Sigmoid colon (tissue), 7 donors: ENCODE measurements at regions of chr7 and their contacts with region 1.

Region 1: DNA sequence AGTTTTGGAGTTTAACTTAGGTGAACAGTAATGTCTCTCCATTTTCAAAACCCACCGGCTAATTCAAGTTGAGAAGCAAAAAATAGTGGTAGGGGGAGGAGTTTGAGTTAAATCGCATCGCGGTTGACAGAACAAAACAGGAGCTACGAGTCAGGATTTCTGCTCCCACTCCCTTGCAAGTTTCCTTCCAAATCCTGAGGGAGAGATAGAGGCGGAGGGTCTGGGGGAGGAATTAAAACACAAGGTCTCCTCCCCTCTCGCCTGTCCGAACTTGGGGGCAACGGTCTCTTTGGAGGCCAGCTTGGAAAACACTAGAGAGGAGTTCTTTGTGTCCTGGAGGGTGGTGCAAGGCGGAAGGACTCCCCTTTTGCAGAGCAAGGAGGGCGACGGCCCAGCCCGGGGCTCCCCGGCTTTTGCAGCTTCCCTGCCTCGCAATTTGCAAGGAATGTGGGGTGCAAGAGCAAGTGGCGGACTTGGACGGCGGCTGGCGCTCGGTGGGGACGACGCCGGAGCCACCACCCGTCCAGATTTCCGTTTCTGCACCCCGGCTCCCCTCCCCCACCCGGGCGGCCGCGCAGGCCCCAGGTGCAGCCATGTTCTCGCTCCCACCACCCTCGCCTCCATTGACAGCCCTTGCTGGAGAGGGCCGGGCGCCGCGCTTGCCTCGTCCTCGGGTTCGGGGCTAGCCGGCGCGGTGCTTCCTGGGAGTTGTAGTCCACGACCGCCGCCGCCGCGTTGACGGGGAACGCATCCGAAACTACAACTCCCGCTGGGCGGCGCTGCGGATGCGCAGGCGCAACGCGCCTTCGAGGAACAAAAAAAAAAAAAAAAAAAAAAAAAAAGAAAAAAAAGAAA is 454 bp upstream of the GTF2I start:
- DNase-seq: peak; percentile 99
- H3K4me3 ChIP-seq: peak overlapping the region; percentile 81 to 100 (median 100)
- H3K27ac ChIP-seq: peak overlapping the region; percentile 99 to 100 (median 99)
- H3K4me1 ChIP-seq: peaks cover 0 to 49% (median 42%) of the 10 kb centered on the region in 4 donors
- H3K27me3 ChIP-seq: no peaks in the 10 kb centered on the region
- CTCF ChIP-seq: no peak
- EP300 ChIP-seq: peak in 1 of 4 donors; percentile 34
- POLR2A ChIP-seq: peak; percentile 52 to 53

Region 2: GRCh38 chr7:74289659-74290514 is 367.2 kb before region 1 on chr7:
- intact Hi-C with region 1: no loop called
- DNase-seq: peak; percentile 82
- H3K4me3 ChIP-seq: peak overlapping the region; percentile 82 to 96 (median 94)
- H3K27ac ChIP-seq: peak overlapping the region; percentile 75 to 86 (median 82)
- H3K4me1 ChIP-seq: peaks cover 0 to 43% (median 32%) of the 10 kb centered on the region in 4 donors
- H3K27me3 ChIP-seq: no peaks in the 10 kb centered on the region
- CTCF ChIP-seq: no peak
- EP300 ChIP-seq: no peak
- POLR2A ChIP-seq: no peak

Region 3: DNA sequence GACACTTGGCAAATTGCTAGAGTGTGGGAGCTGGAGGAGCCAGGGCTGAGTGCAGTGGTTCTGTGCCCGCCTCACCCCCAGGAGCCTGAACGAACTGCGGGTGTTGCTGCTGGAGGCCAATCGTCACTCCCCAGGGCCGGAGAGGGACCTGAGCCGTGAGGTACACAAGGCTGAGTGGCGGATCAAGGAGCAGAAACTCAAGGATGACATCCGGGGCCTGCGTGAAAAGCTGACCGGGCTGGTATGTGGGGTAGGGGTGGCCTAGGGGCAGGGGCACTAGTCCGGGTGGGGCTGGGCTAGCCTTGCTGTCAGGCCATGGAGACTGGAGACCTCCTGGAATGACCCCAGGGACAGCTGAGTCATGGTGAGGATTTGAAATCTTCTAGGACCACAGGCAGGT is 260.1 kb before region 1 on chr7:
- intact Hi-C with region 1: no loop called
- DNase-seq: peak; percentile 56
- H3K4me3 ChIP-seq: no peak overlapping the region
- H3K27ac ChIP-seq: no peak overlapping the region
- H3K4me1 ChIP-seq: peaks cover 0 to 15% (median 10%) of the 10 kb centered on the region in 4 donors
- H3K27me3 ChIP-seq: no peaks in the 10 kb centered on the region
- CTCF ChIP-seq: no peak
- EP300 ChIP-seq: no peak
- POLR2A ChIP-seq: no peak

Region 4: DNA sequence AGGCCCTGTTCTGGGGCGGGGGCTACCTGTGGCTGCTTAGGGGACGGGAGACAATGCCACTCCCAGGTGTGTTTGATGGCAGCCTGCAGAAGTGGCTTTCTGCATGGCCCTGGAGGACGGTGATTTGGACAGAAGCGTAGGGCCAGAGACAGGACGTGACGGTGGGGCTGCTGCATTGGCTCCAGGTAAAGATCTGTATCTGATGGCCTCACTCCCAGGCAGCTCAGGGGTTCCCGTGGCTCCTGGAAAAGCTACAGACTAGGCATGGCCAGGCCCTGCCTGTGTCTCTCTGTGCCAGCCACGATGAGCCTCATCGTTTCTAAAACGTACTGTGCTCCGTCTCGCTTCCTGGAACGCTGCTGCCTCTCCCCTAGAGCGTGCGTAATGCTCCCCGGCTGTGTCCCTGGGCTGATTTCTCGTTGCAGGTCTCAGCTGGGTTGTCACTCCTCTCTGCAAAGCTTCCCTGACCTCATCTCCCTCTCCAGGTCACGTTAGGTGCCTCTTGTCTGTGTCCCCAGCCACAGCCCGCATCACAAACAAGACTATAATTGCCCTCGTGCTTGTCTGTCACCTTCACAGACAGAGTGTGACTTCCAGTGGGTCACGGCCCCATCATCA is 190.8 kb before region 1 on chr7:
- intact Hi-C with region 1: no loop called
- DNase-seq: peak; percentile 79
- H3K4me3 ChIP-seq: no peak overlapping the region
- H3K27ac ChIP-seq: peak overlapping the region; percentile 53 to 74 (median 72)
- H3K4me1 ChIP-seq: peaks cover 0 to 16% (median 5%) of the 10 kb centered on the region in 4 donors
- H3K27me3 ChIP-seq: no peaks in the 10 kb centered on the region
- CTCF ChIP-seq: no peak
- EP300 ChIP-seq: peak in 2 of 4 donors; percentile 52 to 87
- POLR2A ChIP-seq: no peak

Region 5: DNA sequence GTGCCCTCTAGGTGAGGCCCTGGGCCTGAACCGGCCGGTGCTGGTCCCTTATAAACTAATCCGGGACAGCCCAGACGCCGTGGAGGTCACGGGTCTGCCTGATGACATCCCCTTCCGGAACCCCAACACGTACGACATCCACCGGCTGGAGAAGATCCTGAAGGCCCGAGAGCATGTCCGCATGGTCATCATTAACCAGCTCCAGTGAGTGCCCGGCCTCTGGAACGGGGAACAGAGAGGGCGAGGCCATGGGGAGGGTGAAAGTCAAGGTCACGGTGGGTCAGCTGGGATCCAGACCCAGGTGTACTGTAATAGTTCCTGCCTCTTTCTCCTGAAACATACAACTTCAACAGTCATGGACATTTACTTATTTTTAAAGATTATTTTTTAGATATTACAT is 66.2 kb before region 1 on chr7:
- intact Hi-C with region 1: no loop called
- DNase-seq: no peak
- H3K4me3 ChIP-seq: no peak overlapping the region
- H3K27ac ChIP-seq: no peak overlapping the region
- H3K4me1 ChIP-seq: peaks cover 0 to 18% (median 17%) of the 10 kb centered on the region in 4 donors
- H3K27me3 ChIP-seq: no peaks in the 10 kb centered on the region
- CTCF ChIP-seq: no peak
- EP300 ChIP-seq: no peak
- POLR2A ChIP-seq: no peak

Region 6: GRCh38 chr7:74606101-74606908 is 50.8 kb before region 1 on chr7:
- intact Hi-C with region 1: loop called (anchors 2 kb)
- DNase-seq: peak; percentile 76
- H3K4me3 ChIP-seq: peak overlapping the region; percentile 17 to 57 (median 52)
- H3K27ac ChIP-seq: peak overlapping the region; percentile 78 to 84 (median 82)
- H3K4me1 ChIP-seq: peaks cover 0 to 25% (median 16%) of the 10 kb centered on the region in 4 donors
- H3K27me3 ChIP-seq: no peaks in the 10 kb centered on the region
- CTCF ChIP-seq: no peak
- EP300 ChIP-seq: no peak
- POLR2A ChIP-seq: no peak